CD8-positive, alpha-beta T cell (primary cell): ENCODE measurements at regions of chr1 and their contacts with region 1.

Region 1: GRCh38 chr1:115138968-115139367 is 49.7 kb upstream of the TSPAN2 start:
- DNase-seq: peak; percentile 30 to 77 (median 61)
- ATAC-seq: peak; percentile 73
- H3K4me3 ChIP-seq: no peak overlapping the region
- H3K4me3 Mint-ChIP-seq: peak overlapping the region; percentile 72
- H3K27ac ChIP-seq: no peak overlapping the region
- H3K27ac Mint-ChIP-seq: no peak overlapping the region
- H3K4me1 ChIP-seq: no peaks in the 10 kb centered on the region
- H3K4me1 Mint-ChIP-seq: peaks cover 4% of the 10 kb centered on the region
- H3K27me3 ChIP-seq: no peaks in the 10 kb centered on the region
- H3K27me3 Mint-ChIP-seq: peaks cover 17% of the 10 kb centered on the region
- CTCF ChIP-seq: peak; percentile 73

Region 2: GRCh38 chr1:115112496-115113375 is 26.2 kb before region 1 on chr1:
- CTCF ChIA-PET with region 1: interaction called, 37 read pairs
- POLR2A ChIA-PET with region 1: no interaction called
- intact Hi-C with region 1: no loop called
- DNase-seq: peak; percentile 26 to 79 (median 60)
- ATAC-seq: peak; percentile 64
- H3K4me3 ChIP-seq: no peak overlapping the region
- H3K4me3 Mint-ChIP-seq: no peak overlapping the region
- H3K27ac ChIP-seq: no peak overlapping the region
- H3K27ac Mint-ChIP-seq: no peak overlapping the region
- H3K4me1 ChIP-seq: no peaks in the 10 kb centered on the region
- H3K4me1 Mint-ChIP-seq: peaks cover 15% of the 10 kb centered on the region
- H3K27me3 ChIP-seq: no peaks in the 10 kb centered on the region
- H3K27me3 Mint-ChIP-seq: peaks cover 4% of the 10 kb centered on the region
- CTCF ChIP-seq: peak; percentile 99

Region 3: DNA sequence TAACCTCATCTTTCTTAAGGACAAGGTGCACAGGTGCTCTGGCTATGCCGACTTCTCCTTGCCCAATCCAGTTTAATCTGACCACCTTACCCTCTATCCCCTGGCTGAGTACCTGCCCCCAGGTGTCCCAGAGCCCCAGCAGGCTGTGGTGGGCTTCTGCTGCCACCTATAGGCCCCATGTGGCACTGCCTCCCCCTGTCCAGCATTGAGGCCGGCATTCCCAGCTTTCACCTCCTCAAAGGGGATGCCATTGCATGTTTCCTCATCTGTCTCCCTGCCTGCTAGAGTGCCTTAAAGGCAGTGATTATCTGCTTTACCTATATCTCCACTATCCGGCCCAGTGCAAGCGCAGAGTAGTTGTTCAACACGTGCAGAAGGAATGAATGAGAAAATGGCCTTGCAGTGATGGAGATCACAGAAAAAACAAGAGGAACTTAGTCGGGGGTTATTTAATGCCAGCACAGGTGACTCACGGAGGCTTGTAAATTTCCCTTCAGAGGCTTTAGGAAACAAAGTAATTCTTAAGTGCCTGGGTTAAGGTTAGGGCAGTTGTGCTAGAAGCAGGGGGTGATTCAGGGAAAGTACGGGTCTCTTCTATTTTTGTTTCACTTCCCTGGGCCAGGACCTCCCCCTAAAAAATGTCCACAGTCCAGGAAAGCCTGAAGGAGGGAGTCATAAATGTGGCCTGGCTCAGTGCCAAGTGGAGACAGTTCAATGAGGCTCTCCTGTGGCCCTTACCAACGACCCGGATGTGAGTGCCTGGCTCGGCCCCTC is 330.9 kb after region 1 on chr1:
- CTCF ChIA-PET with region 1: interaction called, 21 read pairs
- POLR2A ChIA-PET with region 1: no interaction called
- intact Hi-C with region 1: loop called (anchors 1 to 2 kb)
- DNase-seq: peak in 4 of 9 experiments; percentile 15 to 46 (median 22)
- ATAC-seq: no peak
- H3K4me3 ChIP-seq: no peak overlapping the region
- H3K4me3 Mint-ChIP-seq: no peak overlapping the region
- H3K27ac ChIP-seq: no peak overlapping the region
- H3K27ac Mint-ChIP-seq: no peak overlapping the region
- H3K4me1 ChIP-seq: no peaks in the 10 kb centered on the region
- H3K4me1 Mint-ChIP-seq: peaks cover 3% of the 10 kb centered on the region
- H3K27me3 ChIP-seq: no peaks in the 10 kb centered on the region
- H3K27me3 Mint-ChIP-seq: peaks cover 2% of the 10 kb centered on the region
- CTCF ChIP-seq: peak; percentile 56

Region 4: GRCh38 chr1:115595279-115596079 is 456.5 kb after region 1 on chr1:
- CTCF ChIA-PET with region 1: interaction called, 30 read pairs
- POLR2A ChIA-PET with region 1: no interaction called
- intact Hi-C with region 1: loop called in 1 of 2 experiments (anchors 1 kb)
- DNase-seq: peak; percentile 19 to 65 (median 54)
- ATAC-seq: no peak
- H3K4me3 ChIP-seq: no peak overlapping the region
- H3K4me3 Mint-ChIP-seq: no peak overlapping the region
- H3K27ac ChIP-seq: no peak overlapping the region
- H3K27ac Mint-ChIP-seq: no peak overlapping the region
- H3K4me1 ChIP-seq: no peaks in the 10 kb centered on the region
- H3K4me1 Mint-ChIP-seq: no peaks in the 10 kb centered on the region
- H3K27me3 ChIP-seq: no peaks in the 10 kb centered on the region
- H3K27me3 Mint-ChIP-seq: no peaks in the 10 kb centered on the region
- CTCF ChIP-seq: peak; percentile 53

Region 5: DNA sequence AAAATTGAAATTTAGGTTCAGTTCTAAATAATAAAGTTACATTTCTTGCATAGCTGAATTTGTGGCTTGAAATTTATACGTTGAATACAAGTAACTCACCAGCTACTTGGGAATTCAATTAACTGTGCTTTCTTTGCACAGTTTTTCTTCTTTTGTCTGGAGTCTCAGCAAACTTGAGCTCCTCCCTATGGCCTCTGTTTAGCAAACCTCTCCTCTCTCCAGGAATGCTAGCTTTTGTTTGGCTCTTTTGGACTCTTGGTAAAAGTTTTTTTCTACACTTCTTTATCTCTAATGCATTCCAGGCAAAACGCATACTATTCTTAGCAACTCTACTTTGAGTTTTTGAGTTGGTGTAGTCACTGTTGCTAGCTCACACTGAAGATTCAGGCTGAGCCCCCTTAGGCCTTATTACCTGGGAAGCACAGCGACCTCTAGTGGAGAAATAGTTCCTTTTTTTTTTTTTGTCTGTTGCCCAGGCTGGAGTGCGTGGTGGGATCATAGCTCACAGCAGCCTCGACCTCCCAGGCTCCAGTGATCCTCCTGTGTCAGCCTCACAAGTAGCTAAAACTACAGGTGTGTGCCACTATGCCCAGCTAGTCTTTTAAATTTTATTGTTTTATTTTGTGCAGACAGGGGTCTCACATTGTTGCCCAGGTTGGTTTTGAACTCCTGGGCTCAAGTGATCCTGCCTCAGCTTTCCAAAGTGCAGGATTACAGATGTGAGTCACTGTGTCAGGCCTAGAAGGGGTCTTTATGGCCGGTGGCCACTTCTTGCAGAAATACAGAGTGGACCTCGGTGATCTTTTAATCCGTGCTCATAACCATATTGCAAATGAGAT is 567.8 kb after region 1 on chr1:
- CTCF ChIA-PET with region 1: interaction called, 5 read pairs
- POLR2A ChIA-PET with region 1: no interaction called
- intact Hi-C with region 1: loop called in 1 of 2 experiments (anchors 2 kb)
- DNase-seq: peak in 2 of 9 experiments; percentile 33 to 46
- ATAC-seq: no peak
- H3K4me3 ChIP-seq: no peak overlapping the region
- H3K4me3 Mint-ChIP-seq: no peak overlapping the region
- H3K27ac ChIP-seq: no peak overlapping the region
- H3K27ac Mint-ChIP-seq: no peak overlapping the region
- H3K4me1 ChIP-seq: no peaks in the 10 kb centered on the region
- H3K4me1 Mint-ChIP-seq: no peaks in the 10 kb centered on the region
- H3K27me3 ChIP-seq: peaks cover 0 to 2% of the 10 kb centered on the region in 2 experiments
- H3K27me3 Mint-ChIP-seq: peaks cover 14% of the 10 kb centered on the region
- CTCF ChIP-seq: peak; percentile 71

Region 6: DNA sequence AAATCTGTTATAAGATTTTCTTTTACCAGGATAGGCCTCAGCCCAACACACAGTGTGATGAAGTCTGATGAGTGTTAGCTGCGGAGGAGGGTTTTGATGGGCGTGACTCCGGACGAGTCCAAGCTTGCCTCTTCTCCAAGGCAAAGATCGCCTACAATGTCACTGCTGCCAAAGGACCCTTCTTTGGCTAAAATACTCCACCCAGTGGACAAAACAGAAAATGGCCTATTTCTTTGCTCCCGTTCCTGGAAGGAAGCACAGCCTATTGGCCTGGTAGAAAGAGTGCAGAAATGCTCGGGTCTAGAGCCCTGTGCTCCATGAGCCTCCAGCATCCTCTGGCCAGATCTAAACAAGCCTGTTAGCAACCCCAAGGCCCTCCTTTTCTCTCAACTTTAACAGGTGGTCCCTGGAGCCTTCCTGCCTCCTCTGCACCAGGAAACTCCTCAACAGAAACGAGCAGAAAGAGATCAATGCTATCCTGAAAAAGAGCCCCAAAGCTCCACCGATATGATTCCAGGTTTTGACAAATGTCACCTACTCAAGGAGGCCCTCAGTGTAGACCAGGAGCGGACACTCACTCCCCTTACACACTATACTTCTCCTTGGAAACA is 633.0 kb after region 1 on chr1:
- CTCF ChIA-PET with region 1: interaction called, 3 read pairs
- POLR2A ChIA-PET with region 1: no interaction called
- intact Hi-C with region 1: loop called in 1 of 2 experiments (anchors 5 kb)
- DNase-seq: peak in 2 of 9 experiments; percentile 6 to 29
- ATAC-seq: no peak
- H3K4me3 ChIP-seq: no peak overlapping the region
- H3K4me3 Mint-ChIP-seq: no peak overlapping the region
- H3K27ac ChIP-seq: no peak overlapping the region
- H3K27ac Mint-ChIP-seq: no peak overlapping the region
- H3K4me1 ChIP-seq: no peaks in the 10 kb centered on the region
- H3K4me1 Mint-ChIP-seq: no peaks in the 10 kb centered on the region
- H3K27me3 ChIP-seq: no peaks in the 10 kb centered on the region
- H3K27me3 Mint-ChIP-seq: peaks cover 4% of the 10 kb centered on the region
- CTCF ChIP-seq: no peak

Region 7: DNA sequence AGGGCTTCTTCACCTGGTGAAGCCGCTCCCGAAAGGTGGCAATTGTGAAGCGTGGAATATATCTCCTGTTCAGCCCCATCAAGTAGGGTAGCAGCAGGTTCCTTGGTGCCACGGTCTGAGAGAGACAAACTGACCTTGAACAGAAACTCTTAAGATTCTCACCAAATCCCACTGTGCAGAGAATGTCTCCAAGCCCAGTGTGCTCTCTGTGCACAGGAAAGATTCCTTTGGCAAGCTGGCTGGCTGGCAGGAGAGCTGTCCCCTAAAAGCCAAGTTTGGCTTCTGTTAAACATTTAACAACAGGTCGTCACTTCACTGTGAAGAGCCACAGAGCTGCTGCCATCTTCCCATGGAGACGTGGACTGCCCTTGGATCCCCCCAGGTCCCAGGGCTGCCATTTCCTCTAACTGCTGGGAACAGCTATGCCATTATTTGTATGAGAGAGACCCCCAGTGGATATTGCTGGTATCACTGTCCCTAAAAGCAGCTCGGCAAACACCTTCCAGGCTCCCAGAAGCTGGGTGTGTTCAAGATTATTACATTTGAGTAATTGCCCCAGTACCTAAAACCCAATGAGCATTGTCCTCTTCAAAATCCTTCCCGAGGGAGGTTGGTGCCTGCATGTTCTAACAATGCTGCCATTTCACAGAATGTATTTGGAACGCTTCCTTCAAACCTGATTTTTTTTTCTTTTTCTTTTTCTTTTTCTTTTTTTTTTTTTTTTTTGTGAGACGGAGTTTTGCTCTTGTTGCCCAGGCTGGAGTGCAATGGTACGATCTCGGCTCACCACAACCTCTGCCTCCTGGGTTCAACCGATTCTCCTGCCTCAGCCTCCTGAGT is 1360.0 kb after region 1 on chr1:
- CTCF ChIA-PET with region 1: no interaction called
- POLR2A ChIA-PET with region 1: no interaction called
- intact Hi-C with region 1: loop called in 1 of 2 experiments (anchors 10 kb)
- DNase-seq: peak in 8 of 9 experiments; percentile 20 to 78 (median 52)
- ATAC-seq: peak; percentile 70
- H3K4me3 ChIP-seq: no peak overlapping the region
- H3K4me3 Mint-ChIP-seq: no peak overlapping the region
- H3K27ac ChIP-seq: no peak overlapping the region
- H3K27ac Mint-ChIP-seq: peak overlapping the region; percentile 57
- H3K4me1 ChIP-seq: peaks cover 11% of the 10 kb centered on the region
- H3K4me1 Mint-ChIP-seq: peaks cover 23% of the 10 kb centered on the region
- H3K27me3 ChIP-seq: no peaks in the 10 kb centered on the region
- H3K27me3 Mint-ChIP-seq: no peaks in the 10 kb centered on the region
- CTCF ChIP-seq: peak; percentile 77